Left colon (tissue), 2 donors: ENCODE measurements at regions of chr6 and their contacts with region 1.

Region 1: DNA sequence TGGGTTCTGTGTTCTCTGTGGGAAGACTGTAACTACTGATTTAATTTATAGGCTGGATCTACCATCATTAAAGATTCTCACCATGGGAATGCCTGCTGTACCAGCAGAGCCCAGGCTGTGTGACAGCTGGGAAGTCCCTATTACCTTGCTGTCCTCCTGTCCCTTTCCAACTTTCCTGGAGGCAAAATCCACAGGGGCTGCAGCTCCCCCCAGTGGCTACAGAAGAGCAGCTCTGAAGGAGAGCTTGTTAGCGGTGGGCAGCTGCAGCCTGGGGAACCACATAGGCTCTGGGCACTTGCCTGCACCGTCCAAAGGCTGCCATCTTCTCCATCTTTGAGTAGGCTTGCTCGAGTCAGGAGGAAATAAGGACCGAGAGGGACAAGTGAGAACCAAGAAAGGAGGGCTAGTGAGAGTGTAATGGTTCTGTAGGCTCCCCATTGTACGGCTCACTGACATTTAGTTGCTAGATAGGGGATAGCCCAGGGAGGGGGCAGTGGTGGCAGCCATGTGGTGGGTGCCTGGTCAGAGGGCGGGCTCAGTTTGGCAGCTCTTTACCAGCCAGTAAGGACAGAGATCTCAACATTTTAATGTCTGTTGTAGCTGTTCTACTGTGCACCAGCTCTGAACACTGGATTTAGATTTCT is 155.1 kb upstream of the MLIP start:
- DNase-seq: peak; percentile 65 to 86
- ATAC-seq: peak; percentile 100

Region 2: DNA sequence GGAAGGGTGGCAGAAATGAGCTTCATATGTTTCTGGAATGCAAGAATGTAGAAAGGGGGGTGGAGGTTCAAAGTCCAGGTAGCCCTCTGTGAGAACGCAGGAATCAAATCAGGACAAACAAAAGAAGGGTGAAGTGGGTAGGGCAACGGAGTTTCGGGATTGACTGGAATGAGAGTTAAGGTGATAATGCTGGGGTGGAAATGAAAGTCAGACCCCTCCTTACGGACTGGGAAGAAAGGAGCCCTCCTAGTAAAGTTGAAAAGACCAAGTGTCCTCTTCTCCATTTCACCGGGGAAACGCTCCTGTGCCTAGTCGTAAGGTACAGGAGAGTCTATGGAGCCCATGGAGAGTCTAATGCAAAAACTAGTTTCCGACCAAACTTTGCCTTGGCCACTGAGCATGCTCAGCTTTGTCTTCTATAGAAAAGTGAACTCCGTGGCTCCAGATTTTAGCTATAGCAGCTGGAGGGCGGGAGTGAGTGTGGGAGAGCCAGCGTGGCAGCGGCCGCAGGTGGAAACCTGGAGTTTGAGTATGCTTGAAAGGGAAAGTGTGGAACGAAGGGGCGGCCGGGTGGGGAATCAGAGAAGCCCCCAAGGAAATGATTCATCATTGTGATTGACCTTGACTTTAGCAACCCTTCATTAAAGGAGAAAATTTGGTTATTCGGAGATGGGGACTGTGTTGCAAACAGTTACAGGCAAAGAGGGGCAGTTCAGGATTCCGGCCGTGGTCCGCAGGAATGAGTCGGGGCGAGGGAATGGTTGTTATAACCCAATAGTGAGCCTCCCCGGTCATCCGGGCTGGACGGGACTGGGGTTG is 162.7 kb before region 1 on chr6:
- intact Hi-C with region 1: loop called in 1 of 2 experiments (anchors 2 kb)
- DNase-seq: peak; percentile 71 to 76
- ATAC-seq: peak; percentile 50

Region 3: DNA sequence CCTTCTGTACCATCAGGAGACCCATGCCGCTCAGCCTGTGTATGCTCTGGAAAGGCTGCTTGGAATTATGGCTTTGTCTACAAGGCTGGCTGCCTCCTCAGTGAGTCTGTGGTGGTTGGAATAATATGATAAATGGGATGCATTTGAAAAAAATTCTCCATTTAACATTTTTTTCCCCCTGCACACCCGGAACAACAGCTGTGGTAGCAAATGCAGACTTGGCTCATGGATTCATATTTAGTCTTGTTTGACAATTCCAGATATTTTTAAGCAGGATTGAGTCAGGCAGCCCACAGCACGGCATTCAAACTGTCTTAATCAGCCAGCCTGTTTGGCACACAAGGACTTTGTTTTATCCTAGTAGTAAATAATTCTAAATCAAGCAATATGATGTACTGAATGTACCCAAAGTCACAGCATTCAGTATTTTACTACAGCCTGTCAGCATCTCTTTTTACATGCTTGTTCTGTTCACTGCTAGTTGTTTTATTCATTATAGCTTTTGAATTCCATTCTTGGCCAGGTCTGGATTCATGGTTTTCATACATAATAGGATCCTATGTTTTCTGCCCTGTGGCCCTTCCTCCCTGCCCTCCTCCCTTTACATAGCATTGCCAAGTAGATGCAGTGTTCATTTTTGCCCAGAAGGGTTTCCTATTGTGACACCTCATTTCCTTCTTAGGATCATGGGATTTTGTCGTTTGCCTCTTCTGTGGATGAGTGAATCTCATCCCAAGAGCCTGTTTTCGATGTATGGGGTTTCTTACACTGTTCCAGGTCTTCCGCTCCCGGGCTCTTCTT is 93.3 kb before region 1 on chr6:
- intact Hi-C with region 1: no loop called
- DNase-seq: no peak
- ATAC-seq: no peak